Right ventricle myocardium inferior (tissue), 1 donor: ENCODE measurements at regions of chr7 and their contacts with region 1.

Region 1: GRCh38 chr7:70975754-70976153 is 156.2 kb upstream of the GALNT17 start:
- DNase-seq: no peak
- ATAC-seq: no peak

Region 2: DNA sequence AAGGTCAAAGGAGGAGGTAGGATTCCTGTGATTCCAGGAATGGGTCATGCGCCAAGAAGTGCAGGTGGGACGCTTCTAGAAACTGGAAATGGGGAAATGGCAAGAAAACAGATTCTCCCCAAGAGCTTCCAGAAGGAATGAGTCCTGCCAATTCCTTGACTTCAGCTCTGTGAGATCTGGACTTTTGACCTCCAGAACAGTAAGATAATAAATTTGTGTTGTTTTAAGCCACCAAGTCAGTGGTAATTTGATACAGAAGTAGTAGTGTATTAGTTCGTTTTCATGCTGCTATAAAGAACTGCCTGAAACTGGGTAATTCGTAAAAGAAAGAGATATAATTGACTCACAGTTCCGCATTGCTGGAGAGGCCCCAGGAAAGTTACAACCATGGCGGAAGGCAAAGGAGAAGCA is 22.4 kb before region 1 on chr7:
- intact Hi-C with region 1: loop called (anchors 1 kb)
- DNase-seq: no peak
- ATAC-seq: no peak